ENCODE measurements at regions of chr9 and their contacts with region 1.

Region 1: GRCh38 chr9:135961277-135961705 is at the start of gene UBAC1:
- DNase-seq: peak; percentile 94 to 98 (median 96)
- H3K4me3 ChIP-seq: peak within 1 kb of the TSS; percentile 34 to 99 (median 62)
- H3K27ac ChIP-seq: peak within 1 kb of the TSS; percentile 40 to 95 (median 76)
- H3K4me1 ChIP-seq: peaks cover 6 to 13% of the 10 kb centered on the region in 2 donors
- H3K27me3 ChIP-seq: no peaks in the 10 kb centered on the region
- CTCF ChIP-seq: peak in 5 of 6 experiments; percentile 21 to 63 (median 47)
- POLR2A ChIP-seq: no peak
- total RNA-seq, gene UBAC1: 25.5 to 51.8 (median 37.4) TPM

Region 2: GRCh38 chr9:135701959-135702721 is 259.2 kb before region 1 on chr9 and contains the start of gene KCNT1:
- intact Hi-C with region 1: loop called in 1 of 2 experiments (anchors 10 kb)
- DNase-seq: peak; percentile 32 to 68 (median 55)
- H3K4me3 ChIP-seq: no peak within 1 kb of the TSS
- H3K27ac ChIP-seq: no peak within 1 kb of the TSS
- H3K4me1 ChIP-seq: peaks cover 0 to 8% of the 10 kb centered on the region in 2 donors
- H3K27me3 ChIP-seq: peaks cover 24% of the 10 kb centered on the region
- CTCF ChIP-seq: peak; percentile 39 to 88 (median 67)
- POLR2A ChIP-seq: no peak
- total RNA-seq, gene KCNT1: 0.11 to 2.4 (median 0.28) TPM in 3 of 9 donors, not detected in the others

Region 3: GRCh38 chr9:135726138-135726853 is 235.0 kb before region 1 on chr9:
- intact Hi-C with region 1: no loop called
- DNase-seq: no peak
- H3K4me3 ChIP-seq: no peak overlapping the region
- H3K27ac ChIP-seq: no peak overlapping the region
- H3K4me1 ChIP-seq: no peaks in the 10 kb centered on the region
- H3K27me3 ChIP-seq: peaks cover 6% of the 10 kb centered on the region
- CTCF ChIP-seq: no peak
- POLR2A ChIP-seq: no peak

Region 4: GRCh38 chr9:135864447-135865049 is 96.7 kb before region 1 on chr9:
- intact Hi-C with region 1: loop called in 1 of 2 experiments (anchors 5 kb)
- DNase-seq: peak; percentile 58 to 88 (median 73)
- H3K4me3 ChIP-seq: no peak overlapping the region
- H3K27ac ChIP-seq: no peak overlapping the region
- H3K4me1 ChIP-seq: no peaks in the 10 kb centered on the region
- H3K27me3 ChIP-seq: no peaks in the 10 kb centered on the region
- CTCF ChIP-seq: peak; percentile 70 to 89 (median 78)
- POLR2A ChIP-seq: no peak